CD8-positive, alpha-beta T cell (primary cell): ENCODE measurements at regions of chr13 and their contacts with region 1.

Region 1: DNA sequence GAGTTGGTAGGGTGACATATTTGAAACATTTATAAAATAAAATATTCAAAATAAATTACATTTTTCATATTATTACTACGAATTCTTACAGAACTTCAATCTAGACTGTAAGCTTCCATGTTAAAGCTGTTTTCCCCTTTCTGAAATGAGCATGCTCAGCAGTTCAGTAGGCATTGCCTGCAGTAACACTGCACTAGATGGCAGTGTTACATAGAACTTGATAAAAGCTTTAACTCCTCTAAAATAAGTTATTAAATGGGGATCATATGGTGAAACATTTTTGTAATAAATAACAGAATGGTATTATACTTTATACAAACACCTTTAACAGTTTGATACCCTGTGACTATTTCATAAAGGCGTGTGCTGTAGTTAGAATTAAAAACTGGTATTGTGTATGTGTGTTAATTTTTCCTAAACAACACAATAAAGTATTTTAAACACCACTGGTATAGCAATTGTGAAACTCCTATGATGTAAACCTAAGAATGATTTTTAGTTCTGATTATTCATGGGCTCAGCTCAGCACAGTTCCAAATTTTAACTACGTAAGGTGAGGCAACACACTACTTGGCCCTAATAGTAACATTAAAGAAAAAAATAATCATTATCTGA is 11.6 kb upstream of the GPR18 start:
- DNase-seq: peak in 4 of 9 experiments; percentile 26 to 84 (median 58)
- ATAC-seq: peak; percentile 68
- H3K4me3 ChIP-seq: no peak overlapping the region
- H3K4me3 Mint-ChIP-seq: no peak overlapping the region
- H3K27ac ChIP-seq: no peak overlapping the region
- H3K27ac Mint-ChIP-seq: peak overlapping the region; percentile 92
- H3K4me1 ChIP-seq: peaks cover 54% of the 10 kb centered on the region
- H3K4me1 Mint-ChIP-seq: peaks cover 63% of the 10 kb centered on the region
- H3K27me3 ChIP-seq: no peaks in the 10 kb centered on the region
- H3K27me3 Mint-ChIP-seq: no peaks in the 10 kb centered on the region
- CTCF ChIP-seq: peak; percentile 91

Region 2: GRCh38 chr13:99176309-99177276 is 93.1 kb before region 1 on chr13:
- CTCF ChIA-PET with region 1: interaction called, 375 read pairs
- POLR2A ChIA-PET with region 1: interaction called, 23 read pairs
- intact Hi-C with region 1: loop called (anchors 1 kb)
- DNase-seq: peak; percentile 58 to 87 (median 82)
- ATAC-seq: peak; percentile 93
- H3K4me3 ChIP-seq: peak overlapping the region in 1 of 2 experiments; percentile 25
- H3K4me3 Mint-ChIP-seq: peak overlapping the region; percentile 72
- H3K27ac ChIP-seq: no peak overlapping the region
- H3K27ac Mint-ChIP-seq: peak overlapping the region; percentile 64
- H3K4me1 ChIP-seq: peaks cover 43% of the 10 kb centered on the region
- H3K4me1 Mint-ChIP-seq: peaks cover 45% of the 10 kb centered on the region
- H3K27me3 ChIP-seq: no peaks in the 10 kb centered on the region
- H3K27me3 Mint-ChIP-seq: no peaks in the 10 kb centered on the region
- CTCF ChIP-seq: peak; percentile 80

Region 3: DNA sequence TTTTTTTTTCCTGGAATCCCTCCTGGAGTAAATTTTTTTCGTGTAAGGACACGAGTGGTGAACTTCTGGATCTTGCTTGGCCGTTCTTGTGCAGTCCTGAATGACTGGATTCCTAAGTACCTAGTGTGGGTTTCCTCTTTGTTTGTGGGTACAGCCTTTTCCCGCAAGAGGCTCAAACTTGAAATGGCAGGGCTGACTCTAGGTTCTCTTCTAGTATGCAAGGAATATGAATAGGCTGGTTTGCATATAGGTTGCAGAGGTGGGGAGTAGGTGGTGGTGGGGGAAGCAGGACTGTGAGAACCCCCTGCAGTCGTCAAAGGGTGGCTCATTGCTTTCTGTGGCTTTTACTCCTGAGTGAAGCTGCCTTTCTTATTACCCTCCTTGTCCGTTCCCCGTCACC is 55.5 kb before region 1 on chr13:
- CTCF ChIA-PET with region 1: interaction called, 254 read pairs
- POLR2A ChIA-PET with region 1: interaction called, 3 read pairs
- intact Hi-C with region 1: no loop called
- DNase-seq: peak in 5 of 9 experiments; percentile 33 to 72 (median 60)
- ATAC-seq: peak; percentile 37
- H3K4me3 ChIP-seq: peak overlapping the region; percentile 9 to 65
- H3K4me3 Mint-ChIP-seq: peak overlapping the region; percentile 88
- H3K27ac ChIP-seq: peak overlapping the region; percentile 3 to 78
- H3K27ac Mint-ChIP-seq: peak overlapping the region; percentile 99
- H3K4me1 ChIP-seq: peaks cover 76% of the 10 kb centered on the region
- H3K4me1 Mint-ChIP-seq: peaks cover 81% of the 10 kb centered on the region
- H3K27me3 ChIP-seq: no peaks in the 10 kb centered on the region
- H3K27me3 Mint-ChIP-seq: no peaks in the 10 kb centered on the region
- CTCF ChIP-seq: no peak

Region 4: DNA sequence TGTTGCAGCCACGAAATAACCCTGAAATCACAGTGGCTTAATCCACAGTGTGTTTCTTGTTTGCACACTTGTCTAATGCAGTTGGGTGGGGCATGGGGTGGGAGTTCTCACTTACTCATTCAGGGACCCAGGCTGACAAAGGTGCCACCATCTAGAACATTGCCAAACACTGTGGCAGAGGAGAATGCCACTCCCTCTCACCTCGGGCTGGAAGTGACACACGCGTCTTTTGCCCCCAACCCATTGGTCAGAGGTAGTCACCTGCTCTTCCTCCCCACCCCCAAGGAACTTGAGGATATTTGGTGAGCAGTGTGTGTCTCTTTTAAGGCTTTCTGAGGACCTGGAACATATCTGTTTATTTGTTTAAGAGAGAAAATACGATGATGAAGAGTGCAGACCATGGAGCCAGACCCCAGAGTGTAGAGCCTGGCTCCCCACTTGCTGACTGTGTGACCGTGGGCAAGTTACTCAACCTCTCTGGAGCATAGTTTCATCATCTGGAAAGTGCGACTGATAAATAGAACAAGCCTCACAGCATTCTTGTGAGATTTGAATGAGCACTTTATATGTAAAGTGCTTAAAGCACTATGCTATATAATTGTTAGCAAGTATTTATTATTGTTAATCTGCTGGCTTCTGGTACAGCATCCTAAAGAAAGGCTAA is 20.1 kb after region 1 on chr13:
- CTCF ChIA-PET with region 1: interaction called, 29 read pairs
- POLR2A ChIA-PET with region 1: interaction called, 4 read pairs
- intact Hi-C with region 1: loop called in 1 of 2 experiments (anchors 1 kb)
- DNase-seq: peak in 6 of 9 experiments; percentile 45 to 87 (median 72)
- ATAC-seq: peak; percentile 90
- H3K4me3 ChIP-seq: no peak overlapping the region
- H3K4me3 Mint-ChIP-seq: peak overlapping the region; percentile 39
- H3K27ac ChIP-seq: peak overlapping the region in 1 of 2 experiments; percentile 39
- H3K27ac Mint-ChIP-seq: peak overlapping the region; percentile 62
- H3K4me1 ChIP-seq: peaks cover 50% of the 10 kb centered on the region
- H3K4me1 Mint-ChIP-seq: peaks cover 83% of the 10 kb centered on the region
- H3K27me3 ChIP-seq: no peaks in the 10 kb centered on the region
- H3K27me3 Mint-ChIP-seq: no peaks in the 10 kb centered on the region
- CTCF ChIP-seq: no peak

Region 5: DNA sequence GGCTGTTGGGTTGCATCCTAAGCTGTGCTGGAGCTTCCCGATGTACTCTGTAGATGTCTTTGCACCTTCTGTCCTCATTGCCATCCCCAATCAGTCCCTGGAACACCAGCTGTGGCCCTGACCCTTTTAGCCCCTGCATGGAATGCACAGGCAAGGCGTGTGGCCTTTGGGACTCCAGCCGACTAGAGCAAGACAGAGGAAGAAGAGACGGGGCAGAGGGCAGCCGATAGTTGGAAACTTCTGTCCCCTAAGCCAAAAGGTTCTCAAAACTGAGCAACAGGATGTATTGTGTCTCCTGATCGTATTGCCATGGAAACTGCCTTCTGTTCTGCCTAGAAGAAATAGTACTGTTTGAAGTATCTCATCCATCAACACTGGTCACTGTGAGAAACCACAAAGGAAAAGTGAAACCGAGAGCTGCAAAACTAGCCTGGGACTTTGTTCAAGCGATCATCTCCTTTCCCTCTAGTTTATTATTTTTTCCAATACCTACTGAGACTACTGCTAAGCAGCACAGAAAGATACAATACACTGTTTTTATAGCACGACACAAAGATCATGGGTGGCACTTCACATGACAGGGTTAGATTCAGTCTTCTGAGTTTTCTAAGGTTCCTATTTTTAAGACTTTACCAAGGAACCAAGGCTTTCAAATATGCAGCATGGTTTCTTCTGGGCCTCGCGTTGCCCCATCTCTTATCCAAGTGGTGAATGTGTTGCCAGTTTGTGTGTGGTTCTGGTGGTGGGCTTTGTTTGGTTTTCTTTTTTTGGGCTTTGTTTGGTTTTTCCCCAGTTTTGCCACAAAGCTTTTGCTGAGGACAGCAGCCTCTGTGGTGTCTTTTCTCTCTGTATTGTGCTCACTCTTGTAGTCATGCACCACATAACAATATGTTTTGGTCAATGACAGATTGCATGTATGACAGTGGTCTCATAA is 86.7 kb after region 1 on chr13:
- CTCF ChIA-PET with region 1: interaction called, 35 read pairs
- POLR2A ChIA-PET with region 1: interaction called, 6 read pairs
- intact Hi-C with region 1: no loop called
- DNase-seq: peak in 8 of 9 experiments; percentile 41 to 95 (median 66)
- ATAC-seq: peak; percentile 49
- H3K4me3 ChIP-seq: peak overlapping the region in 1 of 2 experiments; percentile 24
- H3K4me3 Mint-ChIP-seq: peak overlapping the region; percentile 55
- H3K27ac ChIP-seq: peak overlapping the region; percentile 81 to 97
- H3K27ac Mint-ChIP-seq: peak overlapping the region; percentile 99
- H3K4me1 ChIP-seq: peaks cover 98% of the 10 kb centered on the region
- H3K4me1 Mint-ChIP-seq: peaks cover 97% of the 10 kb centered on the region
- H3K27me3 ChIP-seq: no peaks in the 10 kb centered on the region
- H3K27me3 Mint-ChIP-seq: no peaks in the 10 kb centered on the region
- CTCF ChIP-seq: no peak

Region 6: DNA sequence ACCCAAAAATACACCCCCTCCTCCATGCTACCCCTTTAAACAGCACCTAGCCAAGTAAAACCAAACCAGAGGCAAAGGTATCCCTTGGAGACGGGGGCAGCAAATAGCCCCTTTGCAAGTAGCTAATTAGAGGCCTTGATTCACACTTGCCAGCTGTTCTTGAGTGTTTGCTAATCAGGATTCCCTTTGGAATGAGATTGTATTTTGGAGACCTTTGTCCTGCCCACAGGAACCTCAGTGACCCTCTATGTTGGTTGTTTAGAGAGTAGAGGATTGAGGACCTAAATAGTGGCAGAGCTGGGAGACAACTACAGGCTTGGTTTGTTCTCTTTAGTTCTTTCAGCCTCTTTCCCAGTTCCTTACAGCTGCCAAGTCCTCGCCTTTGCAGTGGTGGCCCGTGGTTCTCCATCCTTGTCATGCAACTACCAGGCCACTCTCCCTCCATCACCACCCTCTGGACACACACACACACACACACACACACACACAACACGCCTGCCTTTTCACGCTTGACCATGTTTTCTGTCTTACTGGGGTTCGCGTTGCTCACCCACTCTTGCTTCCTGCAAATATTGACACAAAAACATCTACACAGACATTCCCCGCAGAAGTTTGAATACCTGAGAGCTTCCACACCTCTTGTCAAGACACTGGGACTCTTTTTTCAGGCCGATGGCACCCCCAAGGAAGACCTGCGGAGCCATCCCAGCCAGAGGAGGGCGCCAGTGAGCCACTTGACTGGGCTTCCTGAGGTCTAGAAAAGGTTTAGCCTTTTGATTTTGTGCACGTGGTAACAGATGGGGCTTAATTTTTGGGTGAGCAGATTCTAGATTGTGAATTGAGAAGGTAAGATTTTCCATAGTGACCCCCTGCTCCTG is 117.4 kb after region 1 on chr13:
- CTCF ChIA-PET with region 1: interaction called, 170 read pairs
- POLR2A ChIA-PET with region 1: interaction called, 9 read pairs
- intact Hi-C with region 1: loop called (anchors 1 kb)
- DNase-seq: peak; percentile 77 to 95 (median 87)
- ATAC-seq: peak; percentile 21
- H3K4me3 ChIP-seq: no peak overlapping the region
- H3K4me3 Mint-ChIP-seq: peak overlapping the region; percentile 27
- H3K27ac ChIP-seq: peak overlapping the region in 1 of 2 experiments; percentile 51
- H3K27ac Mint-ChIP-seq: peak overlapping the region; percentile 98
- H3K4me1 ChIP-seq: peaks cover 65% of the 10 kb centered on the region
- H3K4me1 Mint-ChIP-seq: peaks cover 71% of the 10 kb centered on the region
- H3K27me3 ChIP-seq: no peaks in the 10 kb centered on the region
- H3K27me3 Mint-ChIP-seq: no peaks in the 10 kb centered on the region
- CTCF ChIP-seq: peak; percentile 95

Region 7: GRCh38 chr13:99501184-99501847 is 231.6 kb after region 1 on chr13 and contains the start of gene TM9SF2:
- CTCF ChIA-PET with region 1: interaction called, 6 read pairs
- POLR2A ChIA-PET with region 1: no interaction called
- intact Hi-C with region 1: loop called (anchors 5 kb)
- DNase-seq: peak; percentile 92 to 99 (median 97)
- ATAC-seq: peak; percentile 59
- H3K4me3 ChIP-seq: peak within 1 kb of the TSS; percentile 83 to 91
- H3K4me3 Mint-ChIP-seq: peak within 1 kb of the TSS; percentile 99
- H3K27ac ChIP-seq: peak within 1 kb of the TSS; percentile 86 to 88
- H3K27ac Mint-ChIP-seq: peak within 1 kb of the TSS; percentile 98
- H3K4me1 ChIP-seq: peaks cover 66% of the 10 kb centered on the region
- H3K4me1 Mint-ChIP-seq: peaks cover 81% of the 10 kb centered on the region
- H3K27me3 ChIP-seq: no peaks in the 10 kb centered on the region
- H3K27me3 Mint-ChIP-seq: no peaks in the 10 kb centered on the region
- CTCF ChIP-seq: no peak
- total RNA-seq, gene TM9SF2: 42.7 to 47.5 TPM

Region 8: GRCh38 chr13:99636728-99637353 is 367.1 kb after region 1 on chr13:
- CTCF ChIA-PET with region 1: no interaction called
- POLR2A ChIA-PET with region 1: no interaction called
- intact Hi-C with region 1: no loop called
- DNase-seq: no peak
- ATAC-seq: no peak
- H3K4me3 ChIP-seq: no peak overlapping the region
- H3K4me3 Mint-ChIP-seq: no peak overlapping the region
- H3K27ac ChIP-seq: no peak overlapping the region
- H3K27ac Mint-ChIP-seq: no peak overlapping the region
- H3K4me1 ChIP-seq: no peaks in the 10 kb centered on the region
- H3K4me1 Mint-ChIP-seq: no peaks in the 10 kb centered on the region
- H3K27me3 ChIP-seq: no peaks in the 10 kb centered on the region
- H3K27me3 Mint-ChIP-seq: no peaks in the 10 kb centered on the region
- CTCF ChIP-seq: no peak

Region 9: GRCh38 chr13:101181076-101181685 is 1911.4 kb after region 1 on chr13:
- CTCF ChIA-PET with region 1: no interaction called
- POLR2A ChIA-PET with region 1: no interaction called
- intact Hi-C with region 1: no loop called
- DNase-seq: no peak
- ATAC-seq: no peak
- H3K4me3 ChIP-seq: no peak overlapping the region
- H3K4me3 Mint-ChIP-seq: no peak overlapping the region
- H3K27ac ChIP-seq: no peak overlapping the region
- H3K27ac Mint-ChIP-seq: no peak overlapping the region
- H3K4me1 ChIP-seq: no peaks in the 10 kb centered on the region
- H3K4me1 Mint-ChIP-seq: no peaks in the 10 kb centered on the region
- H3K27me3 ChIP-seq: no peaks in the 10 kb centered on the region
- H3K27me3 Mint-ChIP-seq: peaks cover 3% of the 10 kb centered on the region
- CTCF ChIP-seq: no peak